HEK293 (cell line): ENCODE measurements at regions of chr16 and their contacts with region 1.

Region 1: DNA sequence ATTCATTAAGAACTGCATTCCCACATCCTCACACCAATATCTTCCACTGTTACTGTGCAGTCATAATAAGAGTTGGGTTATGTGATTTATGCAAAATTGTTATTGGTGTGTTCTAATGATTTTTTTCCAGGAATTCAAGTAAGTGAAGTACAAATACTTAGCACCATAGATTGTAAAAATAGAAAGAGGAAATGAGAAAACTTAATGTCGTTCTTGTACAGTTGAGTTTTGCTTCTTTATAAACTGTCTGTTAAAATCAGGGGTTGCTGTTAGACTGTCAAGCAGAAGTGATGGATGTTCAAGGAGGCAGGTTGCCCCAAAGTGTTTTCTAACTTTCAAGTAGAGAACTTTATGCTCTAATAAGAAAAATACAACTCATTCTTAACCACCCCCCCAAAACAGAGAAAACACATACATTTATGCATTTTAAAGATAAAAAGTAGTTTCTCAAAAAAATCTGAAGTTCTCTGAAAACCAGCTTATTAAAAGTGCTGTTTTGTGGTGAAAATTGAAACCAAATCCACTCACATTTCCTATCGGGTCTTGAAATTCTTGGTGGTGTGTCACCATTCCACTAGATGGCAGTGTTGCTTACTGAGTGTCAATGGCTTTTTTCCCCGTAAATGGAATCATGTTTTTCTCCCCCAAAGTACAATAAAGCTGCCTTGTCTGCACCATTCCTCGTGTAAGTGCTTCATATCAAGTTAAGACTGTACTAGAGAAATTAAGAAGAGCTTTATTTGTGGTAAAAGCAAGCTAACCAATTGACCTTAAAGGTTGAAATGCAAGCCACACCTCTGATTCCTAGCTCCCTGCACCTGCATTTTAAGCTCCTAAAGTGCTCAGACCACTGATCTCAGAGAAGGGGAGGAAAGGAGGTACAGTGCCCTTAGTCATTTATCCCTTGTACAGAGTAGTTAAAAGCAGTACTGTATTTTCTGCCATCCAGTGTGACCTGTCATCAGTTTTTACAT is 4.7 kb upstream of the IGSF6 start:
- H3K4me3 ChIP-seq: no peak overlapping the region
- H3K27ac ChIP-seq: no peak overlapping the region
- H3K4me1 ChIP-seq: no peaks in the 10 kb centered on the region
- CTCF ChIP-seq: no peak; the same call in 1 of the 2 replicates

Region 2: DNA sequence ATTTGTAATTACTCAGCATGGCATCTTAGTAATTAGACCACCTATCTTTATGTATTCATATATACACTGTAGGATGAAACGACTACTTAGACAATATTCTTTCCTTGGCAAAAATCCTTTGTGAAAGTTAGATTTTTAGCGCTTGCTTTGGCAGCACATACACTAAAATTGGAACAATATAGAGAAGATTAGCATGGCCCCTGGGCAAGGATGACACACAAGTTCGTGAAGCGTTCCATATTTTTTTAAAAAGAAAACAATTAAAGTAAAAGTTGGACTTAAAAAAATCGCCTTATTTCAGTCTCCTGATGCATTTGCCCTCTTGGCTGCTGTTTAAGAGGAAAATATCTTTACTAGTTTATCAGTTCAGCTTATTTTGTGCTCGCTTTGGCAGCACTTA is 15.2 kb before region 1 on chr16:
- CTCF ChIA-PET with region 1: interaction called, 20 read pairs
- POLR2A ChIA-PET with region 1: no interaction called
- H3K4me3 ChIP-seq: no peak overlapping the region
- H3K27ac ChIP-seq: no peak overlapping the region
- H3K4me1 ChIP-seq: no peaks in the 10 kb centered on the region
- CTCF ChIP-seq: no peak

Region 3: GRCh38 chr16:21646721-21647561 is 10.1 kb before region 1 on chr16:
- CTCF ChIA-PET with region 1: interaction called, 20 read pairs
- POLR2A ChIA-PET with region 1: no interaction called
- H3K4me3 ChIP-seq: no peak overlapping the region
- H3K27ac ChIP-seq: no peak overlapping the region
- H3K4me1 ChIP-seq: no peaks in the 10 kb centered on the region
- CTCF ChIP-seq: no peak

Region 4: GRCh38 chr16:21673469-21673868 is 16.4 kb after region 1 on chr16:
- CTCF ChIA-PET with region 1: interaction called, 18 read pairs
- POLR2A ChIA-PET with region 1: no interaction called
- H3K4me3 ChIP-seq: no peak overlapping the region
- H3K27ac ChIP-seq: no peak overlapping the region
- H3K4me1 ChIP-seq: no peaks in the 10 kb centered on the region
- CTCF ChIP-seq: no peak

Region 5: DNA sequence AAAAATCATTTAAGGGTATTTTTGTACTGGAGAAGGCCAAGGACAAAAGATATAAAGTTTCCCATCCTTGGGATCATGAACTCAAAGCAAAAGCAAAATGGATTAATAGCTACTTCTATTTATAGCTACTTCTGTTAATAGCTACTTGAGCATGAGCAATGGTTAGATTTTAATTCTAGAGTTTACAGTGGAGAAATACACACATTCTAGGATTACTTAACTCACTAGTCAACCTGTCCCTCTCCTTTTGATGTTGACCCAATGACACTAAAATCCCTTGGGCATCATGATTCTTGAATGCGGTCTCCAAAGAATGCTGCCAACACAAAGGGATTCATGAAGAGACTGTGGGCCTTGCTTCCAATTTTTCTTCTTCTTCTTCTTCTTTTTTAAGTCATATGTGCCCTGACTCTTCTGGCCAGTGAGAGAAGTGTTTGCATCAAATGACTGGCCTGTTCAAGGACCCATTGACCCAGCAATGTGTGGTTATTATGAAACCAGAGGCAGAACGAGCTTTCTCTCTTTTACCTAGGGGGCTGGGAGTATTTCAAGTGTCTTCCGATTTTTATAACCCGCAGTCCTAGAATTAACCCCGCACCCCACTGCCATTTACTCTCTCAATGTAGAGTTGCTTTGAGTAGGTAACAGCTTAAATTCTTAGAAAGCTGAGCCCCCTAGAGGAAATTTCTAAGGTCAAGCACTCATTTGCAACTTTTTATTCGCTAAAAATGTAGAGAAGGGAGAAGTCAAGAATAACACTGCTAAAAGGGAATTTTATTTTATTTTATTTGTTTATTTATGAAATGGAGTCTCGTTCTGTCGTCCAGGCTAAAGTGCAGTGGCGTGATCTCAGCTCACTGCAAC is 41.3 kb after region 1 on chr16:
- CTCF ChIA-PET with region 1: interaction called, 12 read pairs
- POLR2A ChIA-PET with region 1: no interaction called
- H3K4me3 ChIP-seq: no peak overlapping the region
- H3K27ac ChIP-seq: no peak overlapping the region
- H3K4me1 ChIP-seq: no peaks in the 10 kb centered on the region
- CTCF ChIP-seq: no peak

Region 6: DNA sequence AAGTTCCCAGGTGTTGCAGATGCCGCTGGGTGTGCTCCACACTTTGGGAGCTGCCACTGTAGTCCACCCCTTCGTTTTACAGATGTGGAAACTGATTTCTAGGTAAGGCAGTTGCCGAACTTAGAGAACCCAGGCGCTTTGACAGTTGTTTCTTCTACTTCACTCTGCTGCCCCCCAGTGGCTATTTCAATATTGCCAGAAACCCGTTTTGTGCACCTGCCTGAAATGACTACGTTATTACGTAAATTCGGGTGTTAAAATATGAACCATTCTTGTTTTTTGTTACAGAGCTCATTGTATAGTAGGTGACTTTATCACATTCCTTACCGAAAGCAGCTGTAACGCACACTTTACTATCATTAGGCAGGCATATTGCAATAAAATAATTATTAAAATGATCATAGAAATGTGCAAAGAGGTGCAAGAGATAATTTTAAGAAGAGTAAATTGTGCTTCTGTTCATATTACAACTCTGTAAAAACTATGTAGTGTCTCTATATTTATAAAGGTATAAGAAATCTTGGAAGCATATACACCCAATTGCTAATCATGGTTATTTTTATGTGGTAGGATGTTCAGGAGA is 51.5 kb after region 1 on chr16:
- CTCF ChIA-PET with region 1: interaction called, 43 read pairs
- POLR2A ChIA-PET with region 1: no interaction called
- H3K4me3 ChIP-seq: no peak overlapping the region
- H3K27ac ChIP-seq: no peak overlapping the region
- H3K4me1 ChIP-seq: no peaks in the 10 kb centered on the region
- CTCF ChIP-seq: peak; percentile 50

Region 7: GRCh38 chr16:21713549-21714368 is 56.7 kb after region 1 on chr16:
- CTCF ChIA-PET with region 1: interaction called, 43 read pairs
- POLR2A ChIA-PET with region 1: no interaction called
- H3K4me3 ChIP-seq: no peak overlapping the region
- H3K27ac ChIP-seq: no peak overlapping the region
- H3K4me1 ChIP-seq: no peaks in the 10 kb centered on the region
- CTCF ChIP-seq: no peak